ENCODE measurements at regions of chr3 and their contacts with region 1.

Region 1: DNA sequence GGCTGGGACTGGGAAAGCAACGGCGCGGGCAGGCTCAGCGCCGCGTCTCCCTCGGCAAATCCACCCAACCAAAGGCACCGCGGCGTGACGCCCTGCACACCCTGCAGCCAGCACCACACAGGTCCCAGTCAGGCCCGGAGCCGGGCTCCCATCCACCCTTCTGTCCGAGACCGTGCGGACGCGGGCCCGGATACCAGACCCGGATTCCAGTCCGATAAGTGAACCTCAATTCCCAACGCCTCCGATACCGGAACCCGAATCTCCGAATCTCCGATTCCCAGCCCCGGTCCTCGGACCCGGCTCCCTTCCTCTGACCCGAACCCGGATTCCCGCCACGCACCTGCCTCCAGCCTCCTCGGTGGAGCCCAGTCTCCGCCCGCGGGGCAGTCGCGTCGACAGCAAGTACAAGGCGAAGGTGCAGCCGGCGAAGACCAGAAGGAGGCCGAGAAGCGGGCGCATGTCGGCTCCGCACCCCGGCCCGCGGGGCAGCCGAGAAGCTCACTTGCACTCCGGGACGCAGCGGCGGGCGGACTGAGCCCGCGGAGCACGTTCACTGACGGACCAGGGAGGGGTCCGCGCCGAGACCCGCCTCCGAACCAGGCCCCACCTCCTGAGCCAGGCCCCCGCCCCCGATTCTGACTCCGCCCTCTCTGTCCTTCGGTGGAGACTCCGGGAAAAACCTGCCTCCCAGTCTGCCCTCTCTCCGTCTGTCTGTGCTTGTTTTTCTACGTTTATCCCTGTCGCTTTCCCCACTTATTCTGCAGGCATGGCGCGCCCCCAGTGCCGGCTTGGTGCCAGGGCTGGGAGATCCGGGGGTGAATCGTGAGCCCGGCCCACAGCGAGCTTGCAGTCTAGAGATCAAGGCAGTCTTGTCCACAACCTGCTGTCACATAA is at the start of gene TMEM41A:
- DNase-seq: peak; percentile 93
- ATAC-seq: peak; percentile 97
- H3K4me3 Mint-ChIP-seq: peak within 1 kb of the TSS; percentile 98
- H3K27ac Mint-ChIP-seq: peak within 1 kb of the TSS; percentile 95
- H3K4me1 Mint-ChIP-seq: peaks cover 12% of the 10 kb centered on the region
- H3K27me3 Mint-ChIP-seq: no peaks in the 10 kb centered on the region
- total RNA-seq, gene TMEM41A: 20.9 to 23.7 TPM

Region 2: DNA sequence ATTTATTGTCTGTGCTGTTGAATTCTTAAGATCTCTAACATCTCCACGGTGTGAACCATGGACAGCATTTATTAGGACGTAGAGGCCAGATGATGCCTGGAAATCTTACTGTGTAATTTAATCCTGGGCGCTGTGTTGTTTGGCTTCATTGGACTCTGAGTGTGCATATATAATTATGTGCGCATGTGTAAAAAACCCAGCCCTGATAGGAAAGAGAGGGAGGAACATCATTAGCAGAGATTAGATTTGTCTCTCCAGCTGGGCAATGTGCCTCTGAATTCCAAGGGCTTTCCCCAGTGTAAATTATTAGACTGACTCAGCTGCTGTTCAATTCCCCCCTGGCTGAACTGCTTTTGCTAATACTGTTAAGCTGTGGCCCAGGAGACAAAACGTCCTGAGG is 96.2 kb before region 1 on chr3:
- POLR2A ChIA-PET with region 1: no interaction called
- DNase-seq: no peak
- ATAC-seq: no peak
- H3K4me3 Mint-ChIP-seq: no peak overlapping the region
- H3K27ac Mint-ChIP-seq: no peak overlapping the region
- H3K4me1 Mint-ChIP-seq: no peaks in the 10 kb centered on the region
- H3K27me3 Mint-ChIP-seq: peaks cover 21% of the 10 kb centered on the region

Region 3: DNA sequence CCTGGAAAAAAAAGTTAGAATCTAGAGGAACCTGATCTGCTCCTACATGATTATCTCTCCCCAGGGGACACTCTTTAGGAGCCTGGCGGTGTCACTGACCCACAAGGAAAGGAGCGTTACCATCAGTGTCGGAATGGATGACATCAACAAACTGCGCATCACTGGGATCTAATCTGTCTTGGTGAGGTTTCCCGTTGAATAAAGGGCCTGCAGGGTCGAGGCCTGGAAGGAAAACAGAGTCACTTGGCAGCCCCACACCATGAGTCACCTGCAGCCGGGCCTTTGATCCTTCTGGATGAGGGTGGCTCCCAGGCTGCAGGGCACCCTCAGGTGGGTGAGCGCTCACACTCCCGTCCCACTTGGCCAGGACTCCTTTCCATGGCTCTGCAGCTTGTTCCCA is 28.6 kb after region 1 on chr3:
- POLR2A ChIA-PET with region 1: no interaction called
- DNase-seq: no peak
- ATAC-seq: no peak
- H3K4me3 Mint-ChIP-seq: no peak overlapping the region
- H3K27ac Mint-ChIP-seq: no peak overlapping the region
- H3K4me1 Mint-ChIP-seq: no peaks in the 10 kb centered on the region
- H3K27me3 Mint-ChIP-seq: peaks cover 18% of the 10 kb centered on the region

Region 4: DNA sequence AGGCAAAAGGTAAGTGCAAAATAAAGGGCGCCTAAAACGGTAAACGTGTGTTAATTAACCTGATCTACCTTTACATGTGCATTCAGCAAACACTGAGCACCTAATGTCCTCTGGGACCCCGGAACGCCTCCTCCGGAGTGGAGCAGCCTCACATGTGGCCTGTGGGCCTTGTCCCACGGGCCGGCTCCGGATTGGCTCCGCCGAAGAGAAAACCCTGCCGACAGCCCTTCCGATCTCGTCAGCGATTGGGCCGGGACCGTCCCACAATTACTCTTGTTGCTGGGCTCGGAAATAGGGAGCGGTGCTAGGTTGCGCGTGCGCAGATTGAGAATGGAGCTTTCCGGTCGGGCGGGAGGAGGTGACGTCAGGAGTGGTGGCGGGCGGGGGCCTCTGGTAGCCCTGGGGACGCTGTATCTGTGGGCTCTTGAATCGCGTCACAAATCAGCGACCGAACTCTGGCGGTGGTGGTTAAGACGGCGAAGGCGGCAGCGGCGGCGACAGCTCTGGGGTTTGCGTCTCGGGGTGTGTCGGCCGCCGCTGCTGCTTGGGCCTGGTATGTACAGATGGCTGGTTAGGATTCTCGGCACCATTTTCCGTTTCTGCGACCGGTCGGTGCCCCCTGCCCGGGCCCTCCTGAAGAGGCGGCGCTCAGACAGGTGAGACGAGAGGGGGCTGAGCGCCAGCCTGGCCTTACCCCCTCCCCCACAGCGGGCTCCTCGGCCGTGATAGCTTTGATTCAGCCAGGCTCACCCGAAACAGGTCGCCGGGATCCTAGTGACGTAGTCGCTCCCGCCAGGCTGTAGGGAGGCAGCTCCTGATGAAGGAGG is 87.3 kb after region 1 on chr3 and contains the start of gene SENP2:
- POLR2A ChIA-PET with region 1: interaction called, 13 read pairs
- DNase-seq: peak; percentile 98
- ATAC-seq: peak; percentile 97
- H3K4me3 Mint-ChIP-seq: peak within 1 kb of the TSS; percentile 85
- H3K27ac Mint-ChIP-seq: peak within 1 kb of the TSS; percentile 91
- H3K4me1 Mint-ChIP-seq: peaks cover 24% of the 10 kb centered on the region
- H3K27me3 Mint-ChIP-seq: no peaks in the 10 kb centered on the region
- total RNA-seq, gene SENP2: 31.4 to 32.4 TPM

Measured in activated naive CD8-positive, alpha-beta T cell treated with anti-CD3 and anti-CD28 coated beads, Interleukin-2, amount 10 ng/mL, durations not matched to agents 7 days and 5 days (primary cell).